Activated CD4-positive, alpha-beta T cell treated with anti-CD3 and anti-CD28 coated beads for 36 hours (primary cell): ENCODE measurements at regions of chr19 and their contacts with region 1.

Region 1: DNA sequence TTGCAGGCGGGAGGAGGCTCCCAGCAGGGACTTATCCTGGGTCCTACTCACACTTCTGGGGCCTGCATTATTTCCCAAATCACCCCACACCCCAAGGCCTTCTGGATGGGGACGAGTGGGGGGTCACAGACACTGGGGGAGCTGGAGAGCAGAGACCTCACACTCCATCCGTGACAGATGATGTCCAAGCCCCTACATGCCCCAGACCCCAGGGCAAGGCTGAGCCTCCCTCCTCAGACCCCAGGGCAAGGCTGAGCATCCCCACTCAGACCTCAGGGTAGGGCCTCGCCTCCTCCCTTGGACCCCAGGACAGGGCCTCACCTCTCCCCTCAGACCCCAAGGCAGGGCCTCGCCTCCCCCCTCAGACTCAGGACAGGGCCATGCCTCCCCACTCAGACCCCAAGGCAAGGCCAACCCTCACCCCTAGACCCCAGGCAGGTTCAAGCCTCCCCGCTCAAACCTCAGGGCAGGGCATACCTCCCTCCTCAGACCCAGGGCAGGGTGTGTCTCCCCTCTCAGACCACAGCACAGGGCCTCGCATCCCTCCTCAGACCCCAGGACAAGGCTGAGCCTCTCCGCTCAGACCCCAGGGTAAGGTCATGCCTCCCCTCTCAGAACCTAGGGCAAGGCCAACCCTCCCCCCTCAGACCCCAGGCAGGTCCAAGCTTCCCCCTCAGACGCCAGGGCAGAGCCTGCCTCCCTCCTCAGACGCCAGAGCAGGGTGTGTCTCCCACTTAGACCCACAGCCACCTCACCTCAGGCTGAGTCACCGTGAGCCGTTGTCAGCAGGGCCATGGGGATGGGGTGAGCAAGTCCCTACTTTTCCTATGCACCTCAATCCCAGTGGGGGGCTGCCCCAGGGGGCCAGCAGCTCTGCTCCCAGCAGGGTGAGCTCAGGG is 1.7 kb upstream of the S1PR4 start:
- DNase-seq: peak; percentile 88
- ATAC-seq: peak; percentile 73
- H3K4me3 Mint-ChIP-seq: peak overlapping the region; percentile 82
- H3K27ac Mint-ChIP-seq: peak overlapping the region; percentile 90
- H3K4me1 Mint-ChIP-seq: peaks cover 22% of the 10 kb centered on the region
- H3K27me3 Mint-ChIP-seq: no peaks in the 10 kb centered on the region

Region 2: GRCh38 chr19:3146677-3147100 is 30.2 kb before region 1 on chr19:
- CTCF ChIA-PET with region 1: interaction called, 3 read pairs
- POLR2A ChIA-PET with region 1: no interaction called
- intact Hi-C with region 1: loop called (anchors 1 to 5 kb)
- DNase-seq: peak; percentile 83
- ATAC-seq: peak; percentile 55
- H3K4me3 Mint-ChIP-seq: no peak overlapping the region
- H3K27ac Mint-ChIP-seq: no peak overlapping the region
- H3K4me1 Mint-ChIP-seq: peaks cover 20% of the 10 kb centered on the region
- H3K27me3 Mint-ChIP-seq: no peaks in the 10 kb centered on the region

Region 3: DNA sequence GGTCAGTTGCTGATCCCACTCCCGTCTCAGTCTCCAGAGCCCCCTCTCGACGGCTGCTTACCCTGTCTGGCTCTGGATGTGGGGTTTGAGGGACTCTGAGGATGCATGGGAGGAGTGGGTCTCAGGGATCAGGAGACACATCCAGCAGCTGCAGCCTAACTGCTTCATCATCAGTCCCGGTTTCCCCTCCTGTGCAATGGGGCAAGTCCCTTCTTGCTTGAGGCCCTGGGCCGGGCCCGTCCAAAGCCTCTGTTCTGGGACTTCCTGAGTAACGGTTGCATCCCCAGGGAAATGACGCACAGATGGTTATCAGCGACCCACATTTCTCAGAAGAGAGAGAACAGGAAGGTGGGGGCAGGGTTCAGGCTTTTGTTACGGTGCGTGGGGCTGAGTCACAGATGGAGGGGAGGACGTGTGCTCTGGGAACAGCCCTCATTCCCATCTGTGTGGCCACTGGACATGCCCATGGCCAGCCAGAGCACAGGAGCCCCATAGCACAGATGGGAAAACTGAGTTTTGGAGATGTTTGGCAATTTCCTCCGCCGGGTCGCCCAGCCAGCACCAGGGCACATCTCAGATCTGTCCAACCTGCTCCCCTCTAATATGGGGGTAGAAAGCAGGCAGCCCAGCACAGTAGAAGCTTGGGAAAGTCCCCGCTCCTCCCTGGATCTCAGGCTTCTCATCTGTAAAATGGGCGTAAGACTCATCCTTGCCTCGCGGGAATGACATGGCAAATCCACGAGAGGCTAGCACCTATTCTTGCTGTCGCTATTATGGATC is 21.7 kb before region 1 on chr19:
- CTCF ChIA-PET with region 1: interaction called, 3 read pairs
- POLR2A ChIA-PET with region 1: no interaction called
- intact Hi-C with region 1: loop called in 1 of 2 experiments (anchors 2 kb)
- DNase-seq: peak; percentile 92
- ATAC-seq: peak; percentile 95
- H3K4me3 Mint-ChIP-seq: no peak overlapping the region
- H3K27ac Mint-ChIP-seq: no peak overlapping the region
- H3K4me1 Mint-ChIP-seq: peaks cover 4% of the 10 kb centered on the region
- H3K27me3 Mint-ChIP-seq: no peaks in the 10 kb centered on the region